ENCODE measurements at regions of chr2 and their contacts with region 1.

Region 1: DNA sequence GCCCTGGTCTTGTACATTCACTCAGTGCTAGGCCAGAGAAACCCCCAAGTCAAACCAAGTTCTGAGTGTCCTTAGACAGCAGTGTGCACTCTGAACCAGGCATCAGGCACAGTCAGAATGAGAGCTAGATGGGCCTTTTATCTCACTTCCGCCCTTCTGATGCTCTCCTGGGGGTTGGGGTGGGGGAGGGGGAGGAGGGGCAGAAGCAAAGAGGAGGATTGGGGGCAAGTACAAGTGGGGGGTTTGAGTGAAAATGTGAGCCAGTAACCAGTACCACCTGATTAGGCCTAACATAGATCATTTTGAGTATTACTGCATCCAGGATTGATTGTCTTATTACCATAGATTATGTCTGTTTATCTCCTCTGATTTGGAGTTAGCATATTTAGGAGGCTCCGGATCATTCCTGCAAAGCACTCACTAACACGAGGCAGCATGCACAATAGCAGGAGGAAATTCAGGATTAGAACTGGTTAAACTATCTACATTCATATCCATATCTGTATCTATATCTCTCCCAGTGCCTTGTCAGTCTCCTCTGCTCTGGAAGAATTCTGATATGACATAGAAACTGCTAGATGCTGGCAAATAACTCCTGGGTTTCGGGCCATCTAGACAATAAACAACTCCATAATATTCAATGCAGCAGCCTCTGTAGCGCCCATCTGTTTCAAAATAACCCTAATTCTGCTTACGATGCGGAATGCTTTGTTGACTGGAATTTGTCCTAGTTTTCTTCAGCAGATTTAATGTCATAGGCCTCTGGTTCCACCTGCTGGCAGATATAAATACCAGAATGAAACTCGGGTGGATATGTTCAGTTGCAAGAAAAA is 149.1 kb downstream of the RHBDD1 start:
- DNase-seq: peak in 33 of 42 donors; percentile 22 to 87 (median 60)

Region 2: DNA sequence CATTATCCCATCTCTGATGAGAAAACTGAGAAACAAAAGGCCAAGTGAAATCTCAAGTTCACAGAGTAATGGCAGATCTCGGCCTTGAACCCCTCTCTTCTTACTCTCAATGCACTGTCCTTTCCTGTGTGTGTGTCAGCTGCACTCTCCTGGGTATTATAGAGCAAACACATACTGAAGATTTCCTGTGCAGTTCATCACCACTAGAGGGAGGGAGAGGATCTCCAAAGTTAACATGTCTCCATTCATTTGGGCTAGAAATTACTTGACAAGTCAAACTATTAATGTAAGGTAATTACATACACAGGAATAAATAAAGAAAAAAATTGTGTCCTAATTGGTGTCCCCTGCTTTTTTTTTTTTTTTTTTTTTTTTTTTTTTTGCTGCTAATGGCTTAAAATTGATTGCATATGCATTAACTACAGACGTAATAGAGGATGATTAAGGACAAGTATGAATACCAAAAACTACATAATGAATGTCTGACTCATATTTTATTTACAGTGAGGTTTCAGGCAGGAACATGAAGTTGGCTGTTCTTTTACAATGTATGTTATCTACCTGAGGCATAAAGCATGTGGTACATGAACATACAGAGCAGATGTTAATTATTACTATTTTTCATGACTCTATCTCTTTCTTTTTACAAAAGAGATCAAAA is 1316.2 kb before region 1 on chr2:
- intact Hi-C with region 1: loop called (anchors 10 kb)
- DNase-seq: peak in 14 of 42 donors; percentile 6 to 62 (median 35)

Region 3: DNA sequence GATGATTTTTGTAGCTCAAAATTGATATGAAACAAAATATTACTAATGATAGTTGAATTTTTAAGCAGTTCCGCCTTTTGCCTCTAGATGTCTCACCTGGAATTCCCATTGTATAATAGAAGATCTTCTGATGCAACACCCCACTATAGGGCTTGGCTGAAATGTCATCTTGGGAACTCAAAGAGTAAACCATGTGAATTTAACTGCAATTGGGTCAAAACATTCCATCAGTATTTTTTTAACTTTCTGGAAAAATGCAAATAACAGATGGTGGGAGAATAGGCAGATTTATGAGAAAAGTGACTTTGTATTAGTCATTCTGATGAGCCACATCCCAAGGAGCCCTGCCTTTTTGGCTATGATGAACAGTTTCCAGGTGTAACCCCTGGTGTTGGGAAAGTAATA is 1095.5 kb before region 1 on chr2:
- intact Hi-C with region 1: loop called (anchors 5 kb)
- DNase-seq: peak in 15 of 42 donors; percentile 2 to 69 (median 29)

Region 4: DNA sequence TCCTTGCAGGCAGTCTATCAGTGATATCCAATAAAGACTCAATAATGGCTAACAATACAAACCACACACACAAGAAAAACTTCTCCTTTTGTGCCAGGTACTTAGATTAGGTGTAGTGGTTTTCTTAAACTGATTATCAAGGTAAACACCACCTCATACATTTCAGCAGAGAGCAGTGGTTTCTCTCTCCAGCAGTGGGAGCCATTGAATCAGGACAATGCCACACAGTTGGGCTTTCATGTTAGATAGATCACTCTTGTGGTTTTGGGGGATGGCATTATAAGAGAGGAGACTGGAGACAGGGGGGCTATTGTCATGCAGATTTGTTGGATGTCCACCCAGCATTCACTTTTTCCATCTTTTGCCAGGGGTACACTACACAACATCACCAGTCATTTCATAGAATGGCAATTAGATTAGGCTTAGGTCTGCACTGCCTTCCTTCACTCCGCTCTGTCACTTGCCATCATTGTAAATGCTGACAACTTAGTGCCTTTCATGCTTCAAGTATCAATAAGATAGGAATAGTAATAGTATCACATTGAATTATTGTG is 171.7 kb before region 1 on chr2:
- intact Hi-C with region 1: loop called (anchors 5 kb)
- DNase-seq: peak in 19 of 42 donors; percentile 5 to 77 (median 47)

Measured in head of caudate nucleus (tissue), 42 donors.